ENCODE measurements at regions of chr12 and their contacts with region 1.

Region 1: GRCh38 chr12:65631621-65632111 is 192.6 kb upstream of the HMGA2 start:
- DNase-seq: peak; percentile 99
- ATAC-seq: peak; percentile 49
- H3K4me3 ChIP-seq: no peak overlapping the region; the same call in 1 of the 2 replicates
- H3K27ac ChIP-seq: peak overlapping the region; percentile 99
- H3K4me1 ChIP-seq: peaks cover 65% of the 10 kb centered on the region
- H3K27me3 ChIP-seq: no peaks in the 10 kb centered on the region
- CTCF ChIP-seq: no peak

Region 2: GRCh38 chr12:65510584-65511050 is 121.0 kb before region 1 on chr12:
- CTCF ChIA-PET with region 1: no interaction called
- POLR2A ChIA-PET with region 1: no interaction called
- intact Hi-C with region 1: no loop called
- DNase-seq: no peak
- ATAC-seq: no peak
- H3K4me3 ChIP-seq: no peak overlapping the region
- H3K27ac ChIP-seq: no peak overlapping the region
- H3K4me1 ChIP-seq: no peaks in the 10 kb centered on the region; the same call in 1 of the 2 replicates
- H3K27me3 ChIP-seq: no peaks in the 10 kb centered on the region
- CTCF ChIP-seq: no peak

Region 3: DNA sequence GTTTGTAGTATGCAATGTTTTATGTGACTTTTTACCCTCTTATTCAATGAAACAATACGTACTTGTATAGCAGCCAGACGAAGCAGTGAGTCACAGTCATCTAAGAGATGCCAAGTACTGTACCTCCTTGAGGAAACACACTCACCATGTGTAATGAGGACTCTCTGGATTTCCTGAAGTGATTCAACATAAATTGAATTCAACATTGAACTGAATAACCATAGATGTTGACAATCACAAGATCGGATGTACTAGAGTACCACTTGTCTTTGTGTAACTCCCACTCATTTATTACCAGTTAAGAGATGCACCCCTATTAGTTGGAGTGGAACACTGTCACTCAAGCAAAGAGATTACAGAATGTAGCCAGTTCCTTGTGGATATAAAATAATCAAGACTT is 17.5 kb after region 1 on chr12:
- CTCF ChIA-PET with region 1: interaction called, 7 read pairs
- POLR2A ChIA-PET with region 1: interaction called, 5 read pairs
- intact Hi-C with region 1: loop called (anchors 1 kb)
- DNase-seq: peak; percentile 99
- ATAC-seq: peak; percentile 90
- H3K4me3 ChIP-seq: no peak overlapping the region
- H3K27ac ChIP-seq: peak overlapping the region; percentile 98
- H3K4me1 ChIP-seq: peaks cover 44% of the 10 kb centered on the region
- H3K27me3 ChIP-seq: no peaks in the 10 kb centered on the region
- CTCF ChIP-seq: no peak

Region 4: GRCh38 chr12:65656904-65657351 is 25.3 kb after region 1 on chr12:
- CTCF ChIA-PET with region 1: no interaction called
- POLR2A ChIA-PET with region 1: interaction called, 5 read pairs
- intact Hi-C with region 1: loop called (anchors 1 kb)
- DNase-seq: peak; percentile 99
- ATAC-seq: peak; percentile 85
- H3K4me3 ChIP-seq: no peak overlapping the region
- H3K27ac ChIP-seq: peak overlapping the region; percentile 99
- H3K4me1 ChIP-seq: peaks cover 35% of the 10 kb centered on the region
- H3K27me3 ChIP-seq: no peaks in the 10 kb centered on the region
- CTCF ChIP-seq: no peak

Region 5: GRCh38 chr12:65695113-65695865 is 63.6 kb after region 1 on chr12:
- CTCF ChIA-PET with region 1: no interaction called
- POLR2A ChIA-PET with region 1: interaction called, 3 read pairs
- intact Hi-C with region 1: loop called (anchors 1 kb)
- DNase-seq: peak; percentile 99
- ATAC-seq: peak; percentile 90
- H3K4me3 ChIP-seq: no peak overlapping the region
- H3K27ac ChIP-seq: peak overlapping the region; percentile 85
- H3K4me1 ChIP-seq: peaks cover 45% of the 10 kb centered on the region
- H3K27me3 ChIP-seq: no peaks in the 10 kb centered on the region
- CTCF ChIP-seq: no peak